ENCODE measurements at regions of chr14 and their contacts with region 1.

Region 1: GRCh38 chr14:73568381-73568781 is 632 bp upstream of the ACOT2 start:
- DNase-seq: peak in 4 of 9 experiments; percentile 3 to 47 (median 30)
- ATAC-seq: no peak
- H3K4me3 ChIP-seq: peak overlapping the region; percentile 74 to 84
- H3K4me3 Mint-ChIP-seq: peak overlapping the region; percentile 89
- H3K27ac ChIP-seq: peak overlapping the region; percentile 78 to 80
- H3K27ac Mint-ChIP-seq: peak overlapping the region; percentile 94
- H3K4me1 ChIP-seq: peaks cover 30% of the 10 kb centered on the region
- H3K4me1 Mint-ChIP-seq: peaks cover 47% of the 10 kb centered on the region
- H3K27me3 ChIP-seq: no peaks in the 10 kb centered on the region
- H3K27me3 Mint-ChIP-seq: no peaks in the 10 kb centered on the region
- CTCF ChIP-seq: no peak

Region 2: GRCh38 chr14:71863064-71863463 is 1705.3 kb before region 1 on chr14:
- CTCF ChIA-PET with region 1: no interaction called
- POLR2A ChIA-PET with region 1: no interaction called
- intact Hi-C with region 1: no loop called
- DNase-seq: no peak
- ATAC-seq: no peak
- H3K4me3 ChIP-seq: no peak overlapping the region
- H3K4me3 Mint-ChIP-seq: no peak overlapping the region
- H3K27ac ChIP-seq: no peak overlapping the region
- H3K27ac Mint-ChIP-seq: no peak overlapping the region
- H3K4me1 ChIP-seq: no peaks in the 10 kb centered on the region
- H3K4me1 Mint-ChIP-seq: no peaks in the 10 kb centered on the region
- H3K27me3 ChIP-seq: no peaks in the 10 kb centered on the region
- H3K27me3 Mint-ChIP-seq: peaks cover 14% of the 10 kb centered on the region
- CTCF ChIP-seq: no peak

Region 3: GRCh38 chr14:73503648-73504047 is 64.7 kb before region 1 on chr14:
- CTCF ChIA-PET with region 1: interaction called, 65 read pairs
- POLR2A ChIA-PET with region 1: interaction called, 5 read pairs
- intact Hi-C with region 1: loop called (anchors 1 kb)
- DNase-seq: peak in 3 of 9 experiments; percentile 29 to 55 (median 40)
- ATAC-seq: peak; percentile 82
- H3K4me3 ChIP-seq: no peak overlapping the region
- H3K4me3 Mint-ChIP-seq: no peak overlapping the region
- H3K27ac ChIP-seq: peak overlapping the region in 1 of 2 experiments; percentile 6
- H3K27ac Mint-ChIP-seq: no peak overlapping the region
- H3K4me1 ChIP-seq: no peaks in the 10 kb centered on the region
- H3K4me1 Mint-ChIP-seq: peaks cover 4% of the 10 kb centered on the region
- H3K27me3 ChIP-seq: no peaks in the 10 kb centered on the region
- H3K27me3 Mint-ChIP-seq: no peaks in the 10 kb centered on the region
- CTCF ChIP-seq: no peak

Region 4: GRCh38 chr14:73591690-73592448 is 23.5 kb after region 1 on chr14 and contains the start of gene ACOT4:
- CTCF ChIA-PET with region 1: interaction called, 8 read pairs
- POLR2A ChIA-PET with region 1: interaction called, 11 read pairs
- intact Hi-C with region 1: loop called (anchors 1 to 2 kb)
- DNase-seq: peak; percentile 25 to 85 (median 49)
- ATAC-seq: peak; percentile 87
- H3K4me3 ChIP-seq: peak within 1 kb of the TSS; percentile 80 to 87
- H3K4me3 Mint-ChIP-seq: peak within 1 kb of the TSS; percentile 78
- H3K27ac ChIP-seq: peak within 1 kb of the TSS; percentile 73 to 77
- H3K27ac Mint-ChIP-seq: peak within 1 kb of the TSS; percentile 49
- H3K4me1 ChIP-seq: peaks cover 6% of the 10 kb centered on the region
- H3K4me1 Mint-ChIP-seq: peaks cover 18% of the 10 kb centered on the region
- H3K27me3 ChIP-seq: no peaks in the 10 kb centered on the region
- H3K27me3 Mint-ChIP-seq: no peaks in the 10 kb centered on the region
- CTCF ChIP-seq: no peak
- total RNA-seq, gene ACOT4: 0.81 to 1.1 TPM

Region 5: GRCh38 chr14:73633116-73634010 is 65.0 kb after region 1 on chr14:
- CTCF ChIA-PET with region 1: interaction called, 11 read pairs
- POLR2A ChIA-PET with region 1: interaction called, 4 read pairs
- intact Hi-C with region 1: no loop called
- DNase-seq: peak; percentile 21 to 78 (median 60)
- ATAC-seq: peak; percentile 87
- H3K4me3 ChIP-seq: peak overlapping the region; percentile 56 to 59
- H3K4me3 Mint-ChIP-seq: peak overlapping the region; percentile 83
- H3K27ac ChIP-seq: no peak overlapping the region
- H3K27ac Mint-ChIP-seq: no peak overlapping the region
- H3K4me1 ChIP-seq: peaks cover 8% of the 10 kb centered on the region
- H3K4me1 Mint-ChIP-seq: peaks cover 6% of the 10 kb centered on the region
- H3K27me3 ChIP-seq: no peaks in the 10 kb centered on the region
- H3K27me3 Mint-ChIP-seq: peaks cover 8% of the 10 kb centered on the region
- CTCF ChIP-seq: peak; percentile 72

Region 6: DNA sequence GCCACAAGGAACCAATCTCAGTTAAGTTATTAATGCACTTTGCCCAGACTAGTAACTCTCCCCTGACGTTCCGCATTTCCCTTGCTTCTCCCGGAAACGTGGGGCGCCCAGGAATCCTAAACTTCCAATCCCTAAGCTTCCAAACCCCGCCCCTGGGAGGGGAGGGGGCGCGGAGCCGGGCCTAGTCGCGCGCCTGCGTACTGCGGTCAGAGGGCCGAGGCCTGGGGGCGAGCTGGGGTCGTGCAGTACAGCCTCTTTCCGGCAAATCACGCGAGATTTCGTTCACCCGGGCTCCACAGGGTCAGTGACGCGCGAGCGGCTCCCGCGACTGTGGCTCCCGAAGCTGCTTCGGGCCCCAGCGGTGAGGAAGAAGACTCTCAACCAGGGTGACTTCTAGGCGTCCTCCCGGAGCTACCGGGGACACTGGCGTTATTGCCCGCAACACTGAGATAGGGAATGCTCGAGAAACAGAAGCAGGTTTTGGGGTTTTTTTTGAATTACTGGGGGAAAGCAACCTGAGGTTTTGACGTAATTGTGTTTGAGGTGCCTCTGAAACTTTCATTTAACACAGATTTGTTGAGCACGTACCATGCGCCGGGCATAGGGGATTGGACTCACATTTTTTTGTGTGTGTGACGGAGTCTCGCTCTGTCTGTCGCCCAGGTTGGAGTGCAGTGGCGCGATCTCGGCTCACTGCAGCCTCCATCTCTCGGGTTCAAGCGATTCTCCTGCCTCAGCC is 283.4 kb after region 1 on chr14 and contains the start of gene PTGR2:
- CTCF ChIA-PET with region 1: no interaction called
- POLR2A ChIA-PET with region 1: interaction called, 4 read pairs
- intact Hi-C with region 1: loop called in 1 of 2 experiments (anchors 5 kb)
- DNase-seq: peak; percentile 77 to 97 (median 89)
- ATAC-seq: peak; percentile 93
- H3K4me3 ChIP-seq: peak within 1 kb of the TSS; percentile 47 to 63
- H3K4me3 Mint-ChIP-seq: peak within 1 kb of the TSS; percentile 90
- H3K27ac ChIP-seq: peak within 1 kb of the TSS; percentile 70 to 81
- H3K27ac Mint-ChIP-seq: peak within 1 kb of the TSS; percentile 98
- H3K4me1 ChIP-seq: peaks cover 6% of the 10 kb centered on the region
- H3K4me1 Mint-ChIP-seq: peaks cover 21% of the 10 kb centered on the region
- H3K27me3 ChIP-seq: no peaks in the 10 kb centered on the region
- H3K27me3 Mint-ChIP-seq: no peaks in the 10 kb centered on the region
- CTCF ChIP-seq: no peak
- total RNA-seq, gene PTGR2: 1.2 to 1.4 TPM

Measured in CD8-positive, alpha-beta T cell (primary cell).